ENCODE measurements at regions of chr15 and their contacts with region 1.

Region 1: GRCh38 chr15:85367741-85368140 is 12.7 kb upstream of the AKAP13 start:
- DNase-seq: peak in 1 of 14 experiments; percentile 10
- ATAC-seq: peak; percentile 41
- H3K4me3 ChIP-seq: no peak overlapping the region
- H3K4me3 Mint-ChIP-seq: no peak overlapping the region
- H3K27ac ChIP-seq: no peak overlapping the region
- H3K27ac Mint-ChIP-seq: no peak overlapping the region
- H3K4me1 ChIP-seq: peaks cover 9% of the 10 kb centered on the region
- H3K4me1 Mint-ChIP-seq: peaks cover 9% of the 10 kb centered on the region
- H3K27me3 ChIP-seq: no peaks in the 10 kb centered on the region
- H3K27me3 Mint-ChIP-seq: no peaks in the 10 kb centered on the region
- CTCF ChIP-seq: no peak

Region 2: GRCh38 chr15:85326291-85326690 is 41.5 kb before region 1 on chr15:
- CTCF ChIA-PET with region 1: no interaction called
- POLR2A ChIA-PET with region 1: no interaction called
- intact Hi-C with region 1: no loop called
- DNase-seq: no peak
- ATAC-seq: no peak
- H3K4me3 ChIP-seq: no peak overlapping the region
- H3K4me3 Mint-ChIP-seq: no peak overlapping the region
- H3K27ac ChIP-seq: no peak overlapping the region
- H3K27ac Mint-ChIP-seq: no peak overlapping the region
- H3K4me1 ChIP-seq: peaks cover 20% of the 10 kb centered on the region
- H3K4me1 Mint-ChIP-seq: peaks cover 54% of the 10 kb centered on the region
- H3K27me3 ChIP-seq: no peaks in the 10 kb centered on the region
- H3K27me3 Mint-ChIP-seq: no peaks in the 10 kb centered on the region
- CTCF ChIP-seq: no peak

Region 3: GRCh38 chr15:85340852-85341251 is 26.9 kb before region 1 on chr15:
- CTCF ChIA-PET with region 1: no interaction called
- POLR2A ChIA-PET with region 1: no interaction called
- intact Hi-C with region 1: no loop called
- DNase-seq: no peak
- ATAC-seq: no peak
- H3K4me3 ChIP-seq: no peak overlapping the region
- H3K4me3 Mint-ChIP-seq: no peak overlapping the region
- H3K27ac ChIP-seq: no peak overlapping the region
- H3K27ac Mint-ChIP-seq: no peak overlapping the region
- H3K4me1 ChIP-seq: no peaks in the 10 kb centered on the region
- H3K4me1 Mint-ChIP-seq: no peaks in the 10 kb centered on the region
- H3K27me3 ChIP-seq: no peaks in the 10 kb centered on the region
- H3K27me3 Mint-ChIP-seq: no peaks in the 10 kb centered on the region
- CTCF ChIP-seq: no peak

Region 4: DNA sequence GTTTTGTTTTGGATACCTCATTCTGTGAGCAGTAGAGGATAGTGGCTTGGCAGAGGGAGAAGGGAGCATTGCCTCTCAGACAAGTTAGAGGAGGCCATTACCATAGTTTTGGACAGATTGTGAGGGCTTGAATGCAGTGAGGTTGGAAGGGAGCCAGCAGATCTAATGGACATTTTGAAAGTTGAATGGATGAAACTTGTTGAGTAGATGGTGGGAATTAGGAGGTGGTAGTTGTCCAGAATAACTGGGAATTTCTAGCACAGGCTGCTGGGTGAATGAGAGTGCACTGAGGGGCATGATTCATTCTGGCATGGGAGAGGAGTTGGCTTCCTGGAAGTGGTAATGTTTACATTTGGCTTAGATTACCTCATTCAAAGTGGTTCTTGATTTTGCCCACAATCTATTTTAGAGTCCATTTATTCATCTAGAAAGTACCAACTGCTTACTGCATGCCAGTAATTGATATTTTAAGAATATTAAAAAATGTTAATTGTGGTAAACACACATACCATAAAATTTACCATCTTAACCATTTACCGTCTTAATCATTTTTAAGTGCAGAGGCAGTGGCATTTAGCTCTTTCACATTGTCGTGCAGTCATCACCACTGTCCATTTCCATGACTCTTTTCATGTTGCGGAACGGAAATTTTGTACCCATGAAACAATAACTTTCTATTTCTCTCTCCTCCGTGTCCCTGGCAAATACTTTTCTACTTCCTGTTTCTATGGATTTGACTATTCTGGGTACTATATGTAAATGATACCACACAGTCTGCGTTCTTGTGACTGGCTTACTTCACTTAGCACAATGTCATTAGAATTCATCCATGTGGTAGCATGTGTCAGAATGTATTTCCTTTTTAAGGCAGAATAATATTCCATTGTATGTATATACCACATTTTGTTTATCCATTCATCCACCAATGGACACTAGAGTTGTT is 40.3 kb after region 1 on chr15:
- CTCF ChIA-PET with region 1: no interaction called
- POLR2A ChIA-PET with region 1: no interaction called
- intact Hi-C with region 1: loop called in 1 of 2 experiments (anchors 5 kb)
- DNase-seq: peak in 6 of 14 experiments; percentile 11 to 64 (median 45)
- ATAC-seq: peak; percentile 80
- H3K4me3 ChIP-seq: no peak overlapping the region
- H3K4me3 Mint-ChIP-seq: peak overlapping the region; percentile 65
- H3K27ac ChIP-seq: peak overlapping the region in 1 of 2 donors; percentile 38
- H3K27ac Mint-ChIP-seq: peak overlapping the region; percentile 75
- H3K4me1 ChIP-seq: peaks cover 33% of the 10 kb centered on the region
- H3K4me1 Mint-ChIP-seq: peaks cover 78% of the 10 kb centered on the region
- H3K27me3 ChIP-seq: no peaks in the 10 kb centered on the region
- H3K27me3 Mint-ChIP-seq: no peaks in the 10 kb centered on the region
- CTCF ChIP-seq: no peak

Region 5: GRCh38 chr15:86347245-86347644 is 979.5 kb after region 1 on chr15:
- CTCF ChIA-PET with region 1: no interaction called
- POLR2A ChIA-PET with region 1: no interaction called
- intact Hi-C with region 1: no loop called
- DNase-seq: no peak
- ATAC-seq: no peak
- H3K4me3 ChIP-seq: no peak overlapping the region
- H3K4me3 Mint-ChIP-seq: no peak overlapping the region
- H3K27ac ChIP-seq: no peak overlapping the region
- H3K27ac Mint-ChIP-seq: no peak overlapping the region
- H3K4me1 ChIP-seq: no peaks in the 10 kb centered on the region
- H3K4me1 Mint-ChIP-seq: no peaks in the 10 kb centered on the region
- H3K27me3 ChIP-seq: no peaks in the 10 kb centered on the region
- H3K27me3 Mint-ChIP-seq: peaks cover 5% of the 10 kb centered on the region
- CTCF ChIP-seq: no peak